CD8-positive, alpha-beta T cell (primary cell): ENCODE measurements at regions of chr17 and their contacts with region 1.

Region 1: DNA sequence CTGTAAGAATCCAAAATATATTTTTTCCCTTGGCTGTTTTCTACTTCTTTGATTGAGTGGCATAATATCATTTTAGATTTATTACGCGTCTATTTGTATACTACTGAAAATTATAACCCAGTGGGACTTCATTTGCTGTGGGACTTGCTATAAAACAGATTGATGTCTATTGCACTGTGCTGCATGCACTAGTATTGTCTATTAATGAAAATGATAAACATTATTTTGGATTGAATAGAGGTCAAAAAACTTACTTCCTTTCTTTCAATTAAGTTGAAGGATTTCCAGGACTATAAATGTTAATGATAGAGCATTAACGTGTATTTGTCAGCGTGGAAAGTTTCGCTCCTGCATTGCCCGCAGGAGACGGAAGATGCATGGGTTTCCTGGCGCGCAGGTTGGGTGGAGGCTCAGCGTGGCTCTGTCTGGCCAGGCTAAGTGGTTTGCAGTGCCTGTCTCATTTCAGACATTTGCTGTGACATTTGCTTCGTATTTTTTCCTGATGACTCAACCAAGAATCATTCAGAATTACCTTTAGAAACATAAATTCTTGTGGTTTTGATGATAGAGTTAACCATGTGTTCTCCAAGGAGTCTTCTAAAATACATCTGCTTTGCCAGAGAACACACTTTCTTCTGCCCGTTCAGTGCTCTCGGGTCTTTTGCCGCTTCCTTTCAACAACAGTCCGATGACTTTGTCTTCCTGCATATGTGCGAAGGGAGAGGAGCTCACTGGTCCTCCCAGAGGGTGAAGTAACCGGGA is 216.7 kb downstream of the RPTOR start:
- DNase-seq: peak in 7 of 9 experiments; percentile 31 to 77 (median 65)
- ATAC-seq: peak; percentile 64
- H3K4me3 ChIP-seq: no peak overlapping the region
- H3K4me3 Mint-ChIP-seq: peak overlapping the region; percentile 74
- H3K27ac ChIP-seq: peak overlapping the region in 1 of 2 experiments; percentile 54
- H3K27ac Mint-ChIP-seq: peak overlapping the region; percentile 95
- H3K4me1 ChIP-seq: peaks cover 68% of the 10 kb centered on the region
- H3K4me1 Mint-ChIP-seq: peaks cover 71% of the 10 kb centered on the region
- H3K27me3 ChIP-seq: no peaks in the 10 kb centered on the region
- H3K27me3 Mint-ChIP-seq: no peaks in the 10 kb centered on the region
- CTCF ChIP-seq: no peak

Region 2: GRCh38 chr17:80718428-80718827 is 42.9 kb before region 1 on chr17:
- CTCF ChIA-PET with region 1: no interaction called
- POLR2A ChIA-PET with region 1: no interaction called
- intact Hi-C with region 1: no loop called
- DNase-seq: no peak
- ATAC-seq: no peak
- H3K4me3 ChIP-seq: no peak overlapping the region
- H3K4me3 Mint-ChIP-seq: no peak overlapping the region
- H3K27ac ChIP-seq: no peak overlapping the region
- H3K27ac Mint-ChIP-seq: peak overlapping the region; percentile 53
- H3K4me1 ChIP-seq: peaks cover 23% of the 10 kb centered on the region
- H3K4me1 Mint-ChIP-seq: peaks cover 46% of the 10 kb centered on the region
- H3K27me3 ChIP-seq: no peaks in the 10 kb centered on the region
- H3K27me3 Mint-ChIP-seq: no peaks in the 10 kb centered on the region
- CTCF ChIP-seq: no peak

Region 3: GRCh38 chr17:80743181-80743771 is 18.0 kb before region 1 on chr17:
- CTCF ChIA-PET with region 1: interaction called, 3 read pairs
- POLR2A ChIA-PET with region 1: interaction called, 3 read pairs
- intact Hi-C with region 1: loop called in 1 of 2 experiments (anchors 2 kb)
- DNase-seq: peak in 8 of 9 experiments; percentile 15 to 80 (median 50)
- ATAC-seq: peak; percentile 82
- H3K4me3 ChIP-seq: peak overlapping the region; percentile 13
- H3K4me3 Mint-ChIP-seq: peak overlapping the region; percentile 82
- H3K27ac ChIP-seq: peak overlapping the region in 1 of 2 experiments; percentile 32
- H3K27ac Mint-ChIP-seq: peak overlapping the region; percentile 90
- H3K4me1 ChIP-seq: peaks cover 59% of the 10 kb centered on the region
- H3K4me1 Mint-ChIP-seq: peaks cover 69% of the 10 kb centered on the region
- H3K27me3 ChIP-seq: no peaks in the 10 kb centered on the region
- H3K27me3 Mint-ChIP-seq: no peaks in the 10 kb centered on the region
- CTCF ChIP-seq: no peak

Region 4: GRCh38 chr17:80773243-80773991 is 12.1 kb after region 1 on chr17:
- CTCF ChIA-PET with region 1: interaction called, 13 read pairs
- POLR2A ChIA-PET with region 1: interaction called, 13 read pairs
- intact Hi-C with region 1: loop called in 1 of 2 experiments (anchors 2 kb)
- DNase-seq: peak in 2 of 9 experiments; percentile 56 to 59
- ATAC-seq: peak; percentile 81
- H3K4me3 ChIP-seq: no peak overlapping the region
- H3K4me3 Mint-ChIP-seq: peak overlapping the region; percentile 75
- H3K27ac ChIP-seq: no peak overlapping the region
- H3K27ac Mint-ChIP-seq: peak overlapping the region; percentile 95
- H3K4me1 ChIP-seq: peaks cover 31% of the 10 kb centered on the region
- H3K4me1 Mint-ChIP-seq: peaks cover 61% of the 10 kb centered on the region
- H3K27me3 ChIP-seq: no peaks in the 10 kb centered on the region
- H3K27me3 Mint-ChIP-seq: no peaks in the 10 kb centered on the region
- CTCF ChIP-seq: no peak

Region 5: GRCh38 chr17:80817321-80818251 is 56.3 kb after region 1 on chr17:
- CTCF ChIA-PET with region 1: no interaction called
- POLR2A ChIA-PET with region 1: no interaction called
- intact Hi-C with region 1: loop called in 1 of 2 experiments (anchors 10 kb)
- DNase-seq: no peak
- ATAC-seq: no peak
- H3K4me3 ChIP-seq: no peak overlapping the region
- H3K4me3 Mint-ChIP-seq: no peak overlapping the region
- H3K27ac ChIP-seq: no peak overlapping the region
- H3K27ac Mint-ChIP-seq: no peak overlapping the region
- H3K4me1 ChIP-seq: no peaks in the 10 kb centered on the region
- H3K4me1 Mint-ChIP-seq: peaks cover 33% of the 10 kb centered on the region
- H3K27me3 ChIP-seq: no peaks in the 10 kb centered on the region
- H3K27me3 Mint-ChIP-seq: no peaks in the 10 kb centered on the region
- CTCF ChIP-seq: no peak

Region 6: GRCh38 chr17:80832888-80833583 is 71.7 kb after region 1 on chr17:
- CTCF ChIA-PET with region 1: no interaction called
- POLR2A ChIA-PET with region 1: no interaction called
- intact Hi-C with region 1: loop called (anchors 2 to 10 kb)
- DNase-seq: peak; percentile 30 to 89 (median 75)
- ATAC-seq: peak; percentile 92
- H3K4me3 ChIP-seq: peak overlapping the region; percentile 51 to 68
- H3K4me3 Mint-ChIP-seq: peak overlapping the region; percentile 92
- H3K27ac ChIP-seq: peak overlapping the region; percentile 77 to 84
- H3K27ac Mint-ChIP-seq: peak overlapping the region; percentile 96
- H3K4me1 ChIP-seq: peaks cover 19% of the 10 kb centered on the region
- H3K4me1 Mint-ChIP-seq: peaks cover 27% of the 10 kb centered on the region
- H3K27me3 ChIP-seq: no peaks in the 10 kb centered on the region
- H3K27me3 Mint-ChIP-seq: no peaks in the 10 kb centered on the region
- CTCF ChIP-seq: no peak

Region 7: DNA sequence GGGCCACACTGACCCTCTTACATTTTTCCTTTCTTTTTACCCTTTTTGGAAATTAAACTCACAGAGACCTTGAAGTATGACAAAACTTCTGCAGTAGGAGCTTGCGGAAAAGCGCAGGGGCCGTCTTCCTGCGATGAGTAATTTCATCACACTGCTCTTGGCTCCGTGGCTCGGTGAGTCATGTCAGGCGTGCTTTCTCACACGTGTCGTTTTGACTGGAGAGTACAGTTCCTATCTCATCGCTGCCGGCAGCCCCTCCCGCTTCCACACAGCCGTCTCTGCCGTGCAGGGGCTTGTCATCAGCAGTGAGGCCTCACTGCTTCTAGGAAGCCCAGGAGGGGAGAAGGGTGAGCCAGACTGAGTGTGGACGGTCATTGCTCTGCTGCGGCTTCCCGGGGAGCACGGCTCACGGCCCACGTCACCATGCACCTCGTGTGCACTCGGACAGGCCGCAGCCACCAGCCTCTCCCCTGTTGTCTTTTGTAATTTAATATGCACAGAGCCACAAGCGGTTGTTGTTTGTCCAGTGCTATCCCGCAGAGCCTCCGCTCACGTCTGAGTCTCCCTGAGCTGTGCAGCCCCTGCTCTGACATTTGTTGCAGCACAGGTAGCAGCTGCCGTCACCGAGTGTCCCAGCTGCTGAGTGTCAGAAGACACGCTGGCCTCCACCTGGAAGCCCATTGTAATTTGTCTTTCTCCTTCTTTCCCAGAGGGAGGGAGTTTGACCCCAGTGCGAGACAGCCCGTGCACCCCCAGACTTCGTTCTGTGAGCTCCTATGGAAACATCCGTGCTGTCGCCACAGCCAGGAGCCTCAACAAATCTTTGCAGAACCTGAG is 130.9 kb after region 1 on chr17:
- CTCF ChIA-PET with region 1: no interaction called
- POLR2A ChIA-PET with region 1: no interaction called
- intact Hi-C with region 1: loop called (anchors 10 kb)
- DNase-seq: peak; percentile 55 to 94 (median 74)
- ATAC-seq: peak; percentile 83
- H3K4me3 ChIP-seq: peak overlapping the region in 1 of 2 experiments; percentile 21
- H3K4me3 Mint-ChIP-seq: peak overlapping the region; percentile 68
- H3K27ac ChIP-seq: peak overlapping the region; percentile 47 to 89
- H3K27ac Mint-ChIP-seq: peak overlapping the region; percentile 96
- H3K4me1 ChIP-seq: peaks cover 32% of the 10 kb centered on the region
- H3K4me1 Mint-ChIP-seq: peaks cover 41% of the 10 kb centered on the region
- H3K27me3 ChIP-seq: no peaks in the 10 kb centered on the region
- H3K27me3 Mint-ChIP-seq: no peaks in the 10 kb centered on the region
- CTCF ChIP-seq: no peak